GM13976 (cell line): ENCODE measurements at regions of chr3 and their contacts with region 1.

Region 1: DNA sequence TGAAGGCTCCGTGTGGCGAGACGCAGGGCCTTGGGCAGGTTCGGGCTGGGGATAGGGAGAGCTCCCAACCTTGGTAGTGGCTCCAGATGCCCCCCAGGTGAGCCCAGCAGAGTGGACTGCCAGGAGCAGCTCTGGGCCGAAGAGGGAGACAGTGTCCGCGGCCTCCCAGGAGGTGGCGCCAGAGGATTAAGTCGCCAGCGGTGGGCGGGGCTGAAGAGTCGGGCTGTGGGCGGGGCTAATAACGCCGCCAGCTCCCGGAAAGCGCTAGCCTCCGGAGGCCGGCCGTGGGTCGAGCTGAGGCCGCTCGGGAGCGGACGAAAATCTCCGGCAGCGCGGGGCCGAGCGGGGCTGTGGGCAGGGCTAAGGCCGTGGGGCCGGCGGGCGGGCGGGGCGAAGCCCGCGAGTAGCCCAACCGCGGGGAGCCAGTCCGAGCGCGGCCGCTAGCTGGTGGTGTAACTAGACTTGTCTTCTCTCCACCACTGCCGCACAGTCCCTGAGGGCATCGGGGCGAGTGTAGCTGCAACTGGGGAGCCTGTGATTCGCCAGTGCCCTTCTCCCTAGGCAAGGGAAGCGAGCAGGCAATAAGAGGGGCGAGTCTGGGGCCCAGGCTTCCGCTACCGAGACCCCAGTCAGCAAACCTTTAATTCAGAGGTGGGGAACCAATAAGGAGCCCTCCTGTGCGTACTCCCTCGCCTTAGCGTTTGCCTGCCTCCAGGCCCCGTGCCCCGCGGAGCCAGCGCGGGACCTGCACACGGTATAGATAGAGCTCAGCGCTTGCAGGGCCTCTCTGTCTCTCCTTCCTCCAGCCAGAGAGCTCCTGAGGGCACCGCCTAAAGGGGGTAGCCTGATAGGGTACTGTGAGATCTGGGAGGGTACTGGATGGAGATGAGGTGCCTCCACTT is 14.4 kb upstream of the BSN start:
- DNase-seq: peak; percentile 97
- CTCF ChIP-seq: peak; percentile 86

Region 2: DNA sequence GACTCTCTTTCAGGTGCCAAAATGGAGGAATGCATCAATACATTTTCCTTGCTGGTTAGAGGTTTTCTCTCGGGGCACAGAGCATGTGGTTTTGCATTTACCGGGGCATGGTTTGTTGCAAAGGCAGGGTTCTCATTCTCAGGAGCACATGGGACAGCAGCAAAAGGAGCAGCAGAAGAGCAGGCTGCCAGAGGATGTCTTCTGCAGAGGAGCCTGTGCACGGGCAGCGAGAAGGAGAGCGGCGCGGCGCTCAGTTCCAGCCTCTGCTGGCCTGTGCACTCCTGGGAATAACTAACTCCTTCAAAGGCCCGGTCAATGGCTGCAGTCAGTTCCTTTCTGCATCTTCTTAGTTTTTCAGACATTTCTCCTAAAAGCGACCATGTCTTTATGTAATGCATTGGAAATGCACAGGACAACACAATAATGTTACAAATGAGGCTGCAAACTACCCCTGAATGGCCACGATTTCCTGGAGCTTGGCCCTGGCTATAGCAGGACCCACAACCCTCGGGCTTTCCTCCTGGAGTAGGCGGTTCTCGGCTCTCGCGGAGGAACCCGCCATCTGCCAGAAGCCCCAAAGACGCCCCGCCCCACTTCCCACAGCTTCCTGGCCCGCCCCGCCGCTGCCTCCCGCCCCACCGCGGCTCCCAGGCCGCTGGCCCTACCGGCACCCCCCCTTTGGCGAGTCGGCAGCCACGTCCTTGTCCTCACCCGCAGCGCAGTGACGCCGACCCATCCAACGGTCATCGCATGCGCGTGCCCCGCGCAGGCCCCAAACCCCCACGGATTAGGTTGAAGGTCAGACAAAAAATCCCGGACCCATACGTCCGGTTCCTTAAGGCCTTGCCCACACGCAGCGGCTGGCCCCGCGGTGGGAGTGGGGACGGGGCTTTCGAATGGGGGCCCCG is 263.2 kb before region 1 on chr3 and contains the start of gene C3orf62:
- in situ Hi-C with region 1: no loop called
- DNase-seq: peak; percentile 92
- CTCF ChIP-seq: no peak

Region 3: GRCh38 chr3:49673715-49674496 is 134.0 kb after region 1 on chr3 and contains the start of gene APEH:
- in situ Hi-C with region 1: loop called (anchors 10 kb)
- DNase-seq: peak; percentile 99
- CTCF ChIP-seq: no peak